ENCODE measurements at regions of chr6 and their contacts with region 1.

Region 1: GRCh38 chr6:30828027-30828960 is 56.0 kb upstream of the DDR1 start:
- DNase-seq: peak; percentile 87
- H3K4me3 ChIP-seq: peak overlapping the region; percentile 31
- H3K27ac ChIP-seq: peak overlapping the region; percentile 80
- H3K4me1 ChIP-seq: peaks cover 17% of the 10 kb centered on the region
- H3K27me3 ChIP-seq: no peaks in the 10 kb centered on the region
- CTCF ChIP-seq: peak; percentile 96

Region 2: GRCh38 chr6:30717042-30717844 is 111.1 kb before region 1 on chr6 and contains the start of gene MDC1:
- intact Hi-C with region 1: no loop called
- DNase-seq: peak; percentile 100
- H3K4me3 ChIP-seq: peak within 1 kb of the TSS; percentile 89
- H3K27ac ChIP-seq: peak within 1 kb of the TSS; percentile 98
- H3K4me1 ChIP-seq: peaks cover 51% of the 10 kb centered on the region
- H3K27me3 ChIP-seq: no peaks in the 10 kb centered on the region
- CTCF ChIP-seq: peak; percentile 66
- total RNA-seq, gene MDC1: 14.1 TPM

Region 3: DNA sequence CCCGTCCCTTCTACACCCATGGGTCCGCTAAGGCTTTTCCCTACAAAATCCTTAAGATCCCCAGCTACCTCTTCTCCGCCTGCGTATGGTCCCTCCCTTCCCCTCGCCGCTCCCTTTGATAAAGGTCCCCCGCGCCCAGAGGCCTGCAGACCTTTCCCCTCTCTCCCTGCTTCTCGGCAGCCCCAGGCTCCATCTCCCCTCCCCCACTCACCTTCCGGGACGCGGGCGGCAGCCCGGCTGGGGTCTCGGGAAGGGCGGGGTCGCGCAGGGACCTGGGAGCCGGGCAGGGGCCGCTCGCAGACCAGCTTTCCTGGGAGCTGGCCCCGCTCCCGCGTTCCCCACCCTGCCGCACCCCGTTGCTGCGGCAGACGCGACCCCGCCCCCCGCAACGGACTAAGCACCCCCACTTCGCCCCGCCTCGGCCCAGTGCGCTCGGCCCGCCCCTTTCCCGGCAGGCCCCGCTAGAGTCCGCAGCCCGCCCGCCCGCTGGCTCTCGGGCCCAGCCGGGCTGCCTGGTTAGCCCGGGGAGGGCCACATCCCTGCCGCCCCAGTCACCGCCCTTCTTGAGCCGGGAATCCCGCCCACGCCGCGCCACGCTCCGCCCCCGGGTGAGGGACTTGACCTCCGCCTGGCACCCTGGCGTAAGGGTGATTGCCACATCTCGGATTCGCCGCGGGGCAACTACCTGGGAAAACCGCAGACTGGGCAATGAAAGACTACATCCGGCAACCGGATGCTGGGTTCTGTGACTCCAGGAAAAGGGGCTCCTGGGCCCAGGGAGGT is 85.8 kb before region 1 on chr6 and contains the start of gene FLOT1:
- intact Hi-C with region 1: loop called (anchors 10 kb)
- DNase-seq: peak; percentile 99
- H3K4me3 ChIP-seq: peak within 1 kb of the TSS; percentile 93
- H3K27ac ChIP-seq: peak within 1 kb of the TSS; percentile 98
- H3K4me1 ChIP-seq: peaks cover 73% of the 10 kb centered on the region
- H3K27me3 ChIP-seq: no peaks in the 10 kb centered on the region
- CTCF ChIP-seq: no peak
- total RNA-seq, gene FLOT1: 223 TPM

Region 4: DNA sequence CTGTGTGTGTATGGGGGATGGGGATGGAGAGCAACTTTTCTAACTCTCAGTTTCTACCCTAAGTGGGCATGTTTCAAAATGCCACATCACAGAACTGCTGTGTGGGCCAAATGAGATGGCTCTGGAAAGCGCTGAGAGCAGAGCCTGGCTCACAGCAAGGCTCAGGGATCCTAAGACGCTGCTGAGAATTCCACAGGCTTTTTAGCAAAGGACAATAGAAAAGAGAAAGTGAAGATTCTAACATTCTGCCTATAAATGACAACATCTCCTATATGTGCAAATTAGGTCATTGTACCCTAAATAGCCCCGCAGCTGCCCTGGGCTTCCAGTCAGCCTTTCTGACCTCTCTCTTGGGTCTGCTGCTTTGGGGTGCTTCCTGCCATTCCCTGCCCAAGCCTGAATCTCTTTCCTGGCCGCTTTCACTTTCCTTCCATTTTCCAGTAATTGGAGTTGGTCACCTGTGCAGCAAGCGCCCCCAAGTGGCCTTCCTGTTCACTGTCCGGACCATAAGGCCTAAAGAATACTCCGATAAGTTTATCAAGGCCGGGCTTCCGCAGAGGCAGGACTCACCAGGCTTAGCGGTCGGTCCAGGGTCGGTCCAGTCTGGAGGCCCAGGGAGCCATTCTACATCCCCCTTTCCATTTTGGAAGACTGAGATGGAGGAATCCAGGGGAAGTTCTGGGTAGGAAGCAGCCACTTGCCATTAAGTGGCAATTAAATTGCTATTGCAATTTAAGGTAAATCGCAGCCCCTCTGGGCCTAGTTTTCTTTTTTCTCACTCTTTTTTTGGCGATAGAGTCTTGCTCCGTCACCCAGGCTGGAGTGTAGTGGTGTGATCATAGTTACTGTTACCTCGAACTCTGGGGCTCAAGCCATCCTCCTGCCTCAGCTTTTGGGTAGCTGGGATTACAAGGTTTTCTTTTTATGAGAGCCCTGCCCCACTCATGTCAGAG is 49.4 kb after region 1 on chr6:
- intact Hi-C with region 1: loop called (anchors 5 kb)
- DNase-seq: peak; percentile 90
- H3K4me3 ChIP-seq: peak overlapping the region; percentile 59
- H3K27ac ChIP-seq: peak overlapping the region; percentile 79
- H3K4me1 ChIP-seq: peaks cover 29% of the 10 kb centered on the region
- H3K27me3 ChIP-seq: no peaks in the 10 kb centered on the region
- CTCF ChIP-seq: peak; percentile 91

Region 5: DNA sequence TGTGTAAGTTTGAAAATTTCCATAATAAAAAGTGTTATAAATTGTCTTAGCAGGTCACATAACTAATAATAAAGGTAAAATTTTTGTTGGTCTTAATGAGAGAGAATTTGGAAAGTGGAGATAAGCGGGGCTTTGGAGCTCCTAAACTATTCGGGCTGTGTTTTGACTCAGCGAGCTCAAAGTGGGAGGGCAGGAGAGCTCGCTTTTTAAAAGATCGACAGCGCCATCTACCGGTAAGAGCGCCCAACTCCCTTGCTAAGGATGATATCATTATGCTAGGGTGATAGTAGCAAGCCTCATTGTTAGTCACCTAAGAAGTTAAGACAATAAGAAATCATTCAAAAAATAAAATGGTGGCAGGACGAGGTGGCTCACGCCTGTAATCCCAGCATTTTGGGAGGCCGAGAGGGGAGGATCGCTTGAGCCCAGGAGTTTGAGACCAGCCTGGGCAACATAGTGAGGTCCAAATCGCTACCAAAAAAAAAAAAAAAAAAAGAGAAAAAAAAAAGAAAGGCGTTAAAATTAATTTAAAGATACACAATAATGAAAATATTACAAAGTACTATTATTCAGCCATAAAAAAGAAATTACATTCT is 259.3 kb after region 1 on chr6:
- intact Hi-C with region 1: loop called (anchors 10 kb)
- DNase-seq: peak; percentile 84
- H3K4me3 ChIP-seq: no peak overlapping the region
- H3K27ac ChIP-seq: no peak overlapping the region
- H3K4me1 ChIP-seq: peaks cover 10% of the 10 kb centered on the region
- H3K27me3 ChIP-seq: no peaks in the 10 kb centered on the region
- CTCF ChIP-seq: peak; percentile 87

Region 6: GRCh38 chr6:31321820-31322219 is 493.5 kb after region 1 on chr6:
- intact Hi-C with region 1: no loop called
- DNase-seq: no peak
- H3K4me3 ChIP-seq: no peak overlapping the region
- H3K27ac ChIP-seq: no peak overlapping the region
- H3K4me1 ChIP-seq: no peaks in the 10 kb centered on the region
- H3K27me3 ChIP-seq: no peaks in the 10 kb centered on the region
- CTCF ChIP-seq: no peak

Measured in left ventricle myocardium inferior (tissue), 1 donor.